SK-N-SH (cell line): ENCODE measurements at regions of chr2 and their contacts with region 1.

Region 1: GRCh38 chr2:46601328-46601963 is 122.1 kb downstream of the TMEM247 start:
- DNase-seq: peak; percentile 19
- H3K4me3 ChIP-seq: no peak overlapping the region
- H3K27ac ChIP-seq: no peak overlapping the region
- H3K4me1 ChIP-seq: no peaks in the 10 kb centered on the region
- H3K27me3 ChIP-seq: no peaks in the 10 kb centered on the region
- CTCF ChIP-seq: peak; percentile 75
- EP300 ChIP-seq: no peak
- RAD21 ChIP-seq: peak; percentile 56

Region 2: DNA sequence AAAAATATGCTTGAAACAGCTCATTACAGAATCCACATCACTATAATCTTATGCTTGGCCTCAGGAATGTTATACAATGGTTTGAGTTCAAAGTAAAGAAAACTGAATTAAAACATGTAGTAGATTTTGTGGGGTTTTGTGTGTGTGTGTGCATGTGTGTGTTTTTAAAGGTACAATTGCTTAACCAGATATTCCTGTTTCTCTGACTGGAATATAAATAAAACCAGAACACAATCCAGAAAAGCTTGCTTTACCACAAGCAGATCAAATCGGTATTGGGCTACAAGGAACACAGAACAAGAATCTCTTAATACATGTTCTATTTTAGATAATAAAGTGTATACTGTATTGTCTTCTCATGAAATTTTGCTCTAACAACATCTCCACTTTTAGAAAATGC is 12.1 kb before region 1 on chr2:
- CTCF ChIA-PET with region 1: interaction called, 17 read pairs
- POLR2A ChIA-PET with region 1: no interaction called
- DNase-seq: no peak
- H3K4me3 ChIP-seq: no peak overlapping the region
- H3K27ac ChIP-seq: no peak overlapping the region
- H3K4me1 ChIP-seq: peaks cover 0 to 9% of the 10 kb centered on the region in 2 experiments; a peak in 1 of 4 replicates
- H3K27me3 ChIP-seq: no peaks in the 10 kb centered on the region
- CTCF ChIP-seq: no peak
- EP300 ChIP-seq: no peak
- RAD21 ChIP-seq: no peak